ENCODE measurements at regions of chr17 and their contacts with region 1.

Region 1: DNA sequence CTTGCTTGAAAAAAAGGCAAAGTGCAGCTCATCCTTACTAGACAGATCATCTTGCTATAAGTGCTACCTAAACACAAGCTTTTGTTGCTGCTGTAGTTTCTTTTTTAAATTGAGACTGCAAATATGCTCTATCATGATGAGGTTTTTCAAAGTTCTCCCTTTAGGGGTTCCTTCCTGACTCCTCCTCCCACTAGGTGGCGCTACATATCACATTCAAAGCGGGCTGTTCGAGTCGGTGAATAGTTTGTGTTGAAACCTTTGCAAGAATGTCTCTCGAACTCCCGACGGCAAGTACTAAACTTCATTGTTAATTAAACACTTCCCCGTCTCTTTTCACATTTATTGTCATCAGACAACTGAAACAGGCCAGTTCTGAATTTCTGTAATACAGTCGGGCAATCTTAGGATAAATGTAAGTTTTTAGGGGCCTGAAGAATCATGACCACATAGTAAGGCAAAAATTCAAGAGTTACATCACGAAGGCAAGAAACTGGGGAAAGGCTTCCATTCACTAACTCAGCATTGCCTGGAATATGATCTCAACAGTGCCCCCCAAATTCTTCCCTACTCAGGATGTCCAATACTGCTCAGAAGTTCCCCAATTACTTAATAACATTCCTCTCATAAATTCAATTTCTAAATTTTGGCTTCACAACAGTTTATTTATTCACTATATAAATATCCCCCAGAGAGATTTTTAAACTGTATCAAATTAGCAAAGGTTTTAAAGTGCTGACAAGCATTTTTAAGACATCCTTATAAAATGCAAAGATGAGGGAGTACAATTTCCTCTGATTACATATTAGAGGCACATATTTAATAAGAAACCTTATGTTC is 6.7 kb downstream of the HS3ST3A1 start:
- DNase-seq: peak; percentile 73
- H3K4me3 ChIP-seq: no peak overlapping the region
- H3K27ac ChIP-seq: no peak overlapping the region
- H3K4me1 ChIP-seq: no peaks in the 10 kb centered on the region
- H3K27me3 ChIP-seq: peaks cover 37% of the 10 kb centered on the region
- CTCF ChIP-seq: peak; percentile 81 to 92 (median 84)
- EP300 ChIP-seq: no peak
- POLR2A ChIP-seq: no peak

Region 2: GRCh38 chr17:14300575-14301278 is 705.7 kb after region 1 on chr17 and contains the start of gene HS3ST3B1:
- in situ Hi-C with region 1: loop called in 2 of 4 experiments (anchors 10 to 25 kb)
- intact Hi-C with region 1: loop called (anchors 2 kb)
- DNase-seq: peak; percentile 94
- H3K4me3 ChIP-seq: peak within 1 kb of the TSS; percentile 26 to 62 (median 45)
- H3K27ac ChIP-seq: peak within 1 kb of the TSS; percentile 76 to 79 (median 77)
- H3K4me1 ChIP-seq: peaks cover 0 to 66% (median 41%) of the 10 kb centered on the region in 4 donors
- H3K27me3 ChIP-seq: peaks cover 96% of the 10 kb centered on the region
- CTCF ChIP-seq: peak in 3 of 5 experiments; percentile 12 to 55 (median 28)
- EP300 ChIP-seq: no peak
- POLR2A ChIP-seq: peak; percentile 83
- total RNA-seq, gene HS3ST3B1: 0.40 to 2.5 (median 1.2) TPM in 3 of 4 donors, not detected in the other

Region 3: GRCh38 chr17:14316150-14316785 is 721.3 kb after region 1 on chr17:
- in situ Hi-C with region 1: loop called in 3 of 4 experiments (anchors 10 to 25 kb)
- intact Hi-C with region 1: no loop called
- DNase-seq: no peak
- H3K4me3 ChIP-seq: no peak overlapping the region
- H3K27ac ChIP-seq: no peak overlapping the region
- H3K4me1 ChIP-seq: peaks cover 0 to 2% (median 0%) of the 10 kb centered on the region in 4 donors
- H3K27me3 ChIP-seq: no peaks in the 10 kb centered on the region
- CTCF ChIP-seq: no peak
- EP300 ChIP-seq: no peak
- POLR2A ChIP-seq: no peak

Region 4: DNA sequence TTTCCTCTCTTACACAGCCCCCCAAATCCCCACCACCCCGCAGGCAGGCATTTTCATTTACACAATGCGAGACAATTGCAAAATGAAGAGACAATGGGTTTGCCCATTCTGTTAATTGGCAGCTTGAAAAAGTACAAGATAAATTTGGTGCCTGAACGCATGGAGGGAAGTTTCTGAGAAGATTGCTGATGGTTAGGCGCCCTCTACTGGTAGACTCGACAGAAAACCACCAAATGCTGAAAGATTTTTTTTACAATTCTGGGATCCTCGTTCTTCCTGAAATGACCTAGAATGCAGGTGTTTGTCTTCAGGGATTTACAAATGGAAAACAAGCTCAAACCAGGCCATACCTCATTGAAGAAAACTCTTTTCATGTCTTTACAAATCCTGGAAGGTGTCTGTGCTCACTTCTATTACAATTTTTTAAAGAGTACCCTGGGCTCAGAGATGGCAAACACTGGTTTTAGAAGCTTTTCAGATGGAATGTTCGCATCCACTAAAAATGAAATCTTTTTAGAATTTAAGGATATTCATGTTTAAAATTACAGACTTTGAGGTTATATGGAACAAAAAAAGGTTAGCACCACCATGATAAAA is 1331.6 kb after region 1 on chr17:
- in situ Hi-C with region 1: loop called in 3 of 4 experiments (anchors 5 to 10 kb)
- intact Hi-C with region 1: loop called (anchors 10 kb)
- DNase-seq: peak; percentile 26
- H3K4me3 ChIP-seq: no peak overlapping the region
- H3K27ac ChIP-seq: no peak overlapping the region
- H3K4me1 ChIP-seq: no peaks in the 10 kb centered on the region
- H3K27me3 ChIP-seq: peaks cover 12% of the 10 kb centered on the region
- CTCF ChIP-seq: peak; percentile 61 to 75 (median 74)
- EP300 ChIP-seq: no peak
- POLR2A ChIP-seq: no peak